Posterior vena cava (tissue), 2 donors: ENCODE measurements at regions of chr18 and their contacts with region 1.

Region 1: GRCh38 chr18:71976744-71977143 is 567.4 kb downstream of the CBLN2 start:
- DNase-seq: no peak

Region 2: GRCh38 chr18:71760541-71760940 is 216.2 kb before region 1 on chr18:
- intact Hi-C with region 1: loop called in 1 of 2 experiments (anchors 5 kb)
- DNase-seq: no peak